ENCODE measurements at regions of chr6 and their contacts with region 1.

Region 1: DNA sequence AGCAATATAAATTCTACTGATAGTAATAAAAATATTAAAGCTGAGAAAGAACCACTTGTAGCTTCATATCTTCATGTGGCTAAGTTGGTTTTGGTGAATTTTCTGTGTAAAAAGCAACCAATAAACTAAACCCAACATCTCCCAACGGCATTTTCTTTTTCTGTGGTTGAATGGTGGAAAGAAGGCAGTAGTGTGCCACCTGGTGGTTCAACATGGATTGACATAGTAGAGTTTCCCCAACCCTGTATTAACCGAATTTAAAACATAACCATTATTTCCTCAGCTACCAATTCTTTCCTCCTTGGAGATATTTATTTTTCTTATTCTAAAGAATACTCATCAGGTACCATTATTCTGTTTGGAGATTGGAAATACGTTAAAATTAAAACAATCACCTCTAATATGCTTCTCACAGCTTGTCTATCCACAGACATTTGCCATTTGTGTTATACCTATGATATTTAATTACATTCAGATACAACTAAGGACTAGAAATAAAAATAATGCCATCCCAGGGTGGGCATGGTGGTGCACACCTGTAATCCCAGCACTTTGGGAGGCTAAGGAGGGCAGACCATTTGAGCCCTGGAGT is 117.1 kb upstream of the EEF1E1 start:
- DNase-seq: peak in 1 of 2 donors; percentile 71
- ATAC-seq: peak in 2 of 3 donors; percentile 62 to 64
- H3K4me3 ChIP-seq: no peak overlapping the region
- H3K4me3 Mint-ChIP-seq: no peak overlapping the region
- H3K27ac ChIP-seq: no peak overlapping the region
- H3K27ac Mint-ChIP-seq: no peak overlapping the region
- H3K4me1 ChIP-seq: no peaks in the 10 kb centered on the region
- H3K4me1 Mint-ChIP-seq: no peaks in the 10 kb centered on the region
- H3K27me3 ChIP-seq: no peaks in the 10 kb centered on the region
- H3K27me3 Mint-ChIP-seq: peaks cover 0 to 2% of the 10 kb centered on the region in 2 donors
- CTCF ChIP-seq: peak; percentile 63

Region 2: DNA sequence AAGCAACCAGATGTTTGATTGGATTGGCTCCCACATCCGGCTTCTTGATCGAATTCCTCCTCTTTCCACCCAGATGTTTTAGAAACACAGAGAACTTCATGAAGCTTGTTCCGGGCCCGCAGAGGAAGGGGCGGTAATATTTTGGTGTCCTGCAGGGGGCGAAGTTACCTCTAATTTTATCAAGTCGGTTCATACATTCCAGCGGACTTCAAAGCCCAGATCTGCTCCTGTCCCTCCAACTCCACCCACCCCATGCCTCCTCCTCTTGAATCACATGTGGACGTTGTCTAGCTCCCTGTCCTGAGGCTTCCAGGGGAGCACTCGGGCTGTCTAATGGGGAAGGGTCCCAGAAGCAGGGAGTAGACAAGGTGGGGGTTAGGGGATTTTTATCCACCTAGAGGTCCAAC is 496.4 kb before region 1 on chr6:
- intact Hi-C with region 1: loop called (anchors 5 kb)
- DNase-seq: peak; percentile 23 to 68
- ATAC-seq: peak in 1 of 3 donors; percentile 62
- H3K4me3 ChIP-seq: no peak overlapping the region
- H3K4me3 Mint-ChIP-seq: no peak overlapping the region
- H3K27ac ChIP-seq: no peak overlapping the region
- H3K27ac Mint-ChIP-seq: no peak overlapping the region
- H3K4me1 ChIP-seq: peaks cover 18% of the 10 kb centered on the region
- H3K4me1 Mint-ChIP-seq: peaks cover 0 to 13% of the 10 kb centered on the region in 2 donors
- H3K27me3 ChIP-seq: peaks cover 12% of the 10 kb centered on the region
- H3K27me3 Mint-ChIP-seq: peaks cover 34 to 43% of the 10 kb centered on the region in 2 donors
- CTCF ChIP-seq: peak; percentile 44

Region 3: GRCh38 chr6:8131256-8131897 is 88.1 kb before region 1 on chr6:
- intact Hi-C with region 1: loop called (anchors 5 kb)
- DNase-seq: peak in 1 of 2 donors; percentile 61
- ATAC-seq: peak in 1 of 3 donors; percentile 39
- H3K4me3 ChIP-seq: no peak overlapping the region
- H3K4me3 Mint-ChIP-seq: no peak overlapping the region
- H3K27ac ChIP-seq: no peak overlapping the region
- H3K27ac Mint-ChIP-seq: no peak overlapping the region
- H3K4me1 ChIP-seq: no peaks in the 10 kb centered on the region
- H3K4me1 Mint-ChIP-seq: no peaks in the 10 kb centered on the region
- H3K27me3 ChIP-seq: no peaks in the 10 kb centered on the region
- H3K27me3 Mint-ChIP-seq: peaks cover 19 to 27% of the 10 kb centered on the region in 2 donors
- CTCF ChIP-seq: peak; percentile 13

Measured in natural killer cell (primary cell).